Right lobe of liver (tissue), 6 donors: ENCODE measurements at regions of chr10 and their contacts with region 1.

Region 1: GRCh38 chr10:62250594-62251198 is 17.9 kb downstream of the RTKN2 start:
- DNase-seq: no peak
- ATAC-seq: peak in 1 of 4 donors; percentile 24
- H3K4me3 ChIP-seq: no peak overlapping the region
- H3K27ac ChIP-seq: no peak overlapping the region
- H3K4me1 ChIP-seq: no peaks in the 10 kb centered on the region
- H3K27me3 ChIP-seq: no peaks in the 10 kb centered on the region
- CTCF ChIP-seq: no peak
- POLR2A ChIP-seq: no peak

Region 2: DNA sequence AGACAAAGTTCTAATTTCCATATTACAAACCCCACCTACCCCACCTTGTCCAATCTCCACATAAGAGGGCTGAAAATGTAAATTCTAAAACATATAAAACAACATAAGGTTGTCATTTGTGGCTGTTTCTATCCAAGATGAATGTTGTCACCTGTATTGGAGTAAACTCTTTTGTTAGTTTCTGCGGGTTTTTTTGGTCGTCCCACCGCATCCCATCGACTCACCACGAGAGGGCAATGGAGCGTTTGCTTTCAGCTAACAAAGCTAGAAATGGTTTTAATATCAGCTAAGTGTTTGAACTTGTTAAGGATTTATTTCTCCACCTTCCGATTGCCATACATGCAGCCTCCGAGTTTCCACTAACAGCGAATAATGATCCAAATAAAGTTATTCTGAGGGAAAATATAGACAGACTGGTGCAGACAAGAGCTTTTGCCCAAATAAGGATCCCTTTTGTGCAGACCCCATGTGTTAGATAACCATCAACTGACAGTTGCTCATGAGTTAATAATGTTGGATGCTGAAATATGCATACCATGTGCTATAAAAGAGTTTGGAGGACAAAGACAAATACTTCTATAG is 212.0 kb before region 1 on chr10:
- intact Hi-C with region 1: loop called (anchors 10 kb)
- DNase-seq: peak; percentile 67 to 78 (median 70)
- ATAC-seq: peak; percentile 90 to 94 (median 91)
- H3K4me3 ChIP-seq: no peak overlapping the region
- H3K27ac ChIP-seq: peak overlapping the region; percentile 37 to 67 (median 64)
- H3K4me1 ChIP-seq: peaks cover 0 to 19% (median 6%) of the 10 kb centered on the region in 4 donors
- H3K27me3 ChIP-seq: no peaks in the 10 kb centered on the region
- CTCF ChIP-seq: peak; percentile 75 to 87 (median 83)
- POLR2A ChIP-seq: no peak

Region 3: GRCh38 chr10:63197344-63198106 is 946.8 kb after region 1 on chr10:
- intact Hi-C with region 1: no loop called
- DNase-seq: no peak
- ATAC-seq: peak; percentile 65 to 76 (median 71)
- H3K4me3 ChIP-seq: no peak overlapping the region
- H3K27ac ChIP-seq: no peak overlapping the region
- H3K4me1 ChIP-seq: peaks cover 0 to 10% (median 2%) of the 10 kb centered on the region in 4 donors
- H3K27me3 ChIP-seq: no peaks in the 10 kb centered on the region
- CTCF ChIP-seq: no peak
- POLR2A ChIP-seq: no peak